HEK293 (cell line): ENCODE measurements at regions of chr10 and their contacts with region 1.

Region 1: GRCh38 chr10:57657164-57657765 is 610.4 kb downstream of the IPMK start:
- H3K4me3 ChIP-seq: no peak overlapping the region
- H3K27ac ChIP-seq: no peak overlapping the region
- H3K4me1 ChIP-seq: no peaks in the 10 kb centered on the region
- CTCF ChIP-seq: peak; percentile 37; the same call in 1 of the 2 replicates

Region 2: DNA sequence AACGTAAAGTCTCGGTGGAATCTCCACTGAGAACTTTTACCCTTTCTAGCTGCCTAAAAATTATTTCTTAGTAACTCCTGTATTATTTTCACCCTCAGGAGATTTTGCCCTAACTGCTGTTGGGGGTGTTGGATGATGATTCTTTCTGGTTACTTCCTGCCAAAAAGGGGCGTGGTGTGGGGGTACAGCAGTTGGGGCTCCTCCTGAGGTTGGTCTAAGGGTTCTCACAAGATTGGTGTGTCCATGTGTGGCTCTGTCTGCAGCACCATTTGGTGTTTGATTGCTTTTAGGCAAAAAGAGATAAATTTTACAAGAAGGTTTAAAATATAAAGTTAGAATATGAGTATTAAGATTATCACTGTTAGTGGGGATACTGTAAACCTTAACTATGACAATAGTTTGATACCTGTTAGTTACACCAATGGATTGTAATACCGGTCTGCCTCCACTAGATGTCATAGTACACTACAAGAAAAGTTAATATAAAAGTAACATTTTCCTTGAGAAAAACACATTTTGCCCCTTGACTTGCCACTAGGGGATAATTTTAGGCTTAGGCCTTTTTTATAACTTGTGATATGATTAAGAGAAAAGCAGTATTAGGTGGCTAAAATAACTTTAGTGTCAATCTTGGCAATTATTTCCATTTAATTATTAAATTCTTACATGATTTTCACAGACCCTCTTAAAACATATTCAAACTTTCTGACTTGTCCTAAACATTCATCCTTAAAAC is 318.3 kb before region 1 on chr10:
- CTCF ChIA-PET with region 1: interaction called, 11 read pairs
- POLR2A ChIA-PET with region 1: no interaction called
- H3K4me3 ChIP-seq: no peak overlapping the region
- H3K27ac ChIP-seq: no peak overlapping the region
- H3K4me1 ChIP-seq: no peaks in the 10 kb centered on the region
- CTCF ChIP-seq: peak; percentile 36; the same call in 1 of the 2 replicates